Tibial artery (tissue), 4 donors: ENCODE measurements at regions of chr3 and their contacts with region 1.

Region 1: DNA sequence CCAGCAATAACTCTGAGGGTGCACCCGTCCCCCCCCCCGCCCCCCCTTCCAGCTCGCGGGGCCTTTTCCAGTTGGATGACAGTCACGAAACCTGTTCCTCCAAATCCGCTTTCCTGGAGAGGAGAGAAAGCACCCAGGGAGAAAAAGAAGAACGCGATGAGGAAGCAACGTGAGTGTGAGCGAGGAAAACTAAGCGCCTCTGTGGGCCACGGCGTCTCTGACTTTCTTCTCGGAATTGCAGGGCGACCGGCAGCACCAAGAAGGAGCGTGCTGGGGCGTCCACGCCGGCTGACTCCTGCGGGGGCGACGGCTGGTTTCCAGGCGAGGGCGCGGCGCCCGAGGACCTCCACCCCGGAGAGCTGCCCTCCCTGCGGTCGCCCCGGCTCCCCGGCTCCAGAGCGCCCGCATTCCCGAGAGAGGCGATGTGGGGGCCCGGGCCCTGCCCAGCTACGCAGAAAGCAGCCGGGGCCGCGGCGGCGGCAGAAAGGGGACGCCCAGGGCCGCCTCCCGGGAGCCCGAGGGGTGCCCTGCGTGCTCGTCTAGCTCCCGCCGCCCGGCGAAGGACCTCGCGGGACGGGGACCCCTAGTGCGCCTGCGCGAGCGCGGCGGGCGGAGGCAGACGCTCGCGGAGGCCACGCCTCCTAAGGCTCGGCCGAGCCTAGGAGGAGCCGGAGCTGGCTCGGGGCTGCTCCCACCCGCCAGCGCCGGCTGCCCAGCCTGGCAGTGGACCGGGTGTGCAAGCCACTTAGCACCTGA is 15.4 kb upstream of the ADIPOQ start:
- DNase-seq: peak; percentile 49 to 86
- H3K4me3 ChIP-seq: peak overlapping the region; percentile 65 to 93
- H3K27ac ChIP-seq: peak overlapping the region; percentile 68 to 70
- H3K4me1 ChIP-seq: peaks cover 0 to 18% (median 10%) of the 10 kb centered on the region in 4 donors
- H3K27me3 ChIP-seq: peaks cover 0 to 34% of the 10 kb centered on the region in 2 donors
- CTCF ChIP-seq: peak in 1 of 2 experiments; percentile 16

Region 2: DNA sequence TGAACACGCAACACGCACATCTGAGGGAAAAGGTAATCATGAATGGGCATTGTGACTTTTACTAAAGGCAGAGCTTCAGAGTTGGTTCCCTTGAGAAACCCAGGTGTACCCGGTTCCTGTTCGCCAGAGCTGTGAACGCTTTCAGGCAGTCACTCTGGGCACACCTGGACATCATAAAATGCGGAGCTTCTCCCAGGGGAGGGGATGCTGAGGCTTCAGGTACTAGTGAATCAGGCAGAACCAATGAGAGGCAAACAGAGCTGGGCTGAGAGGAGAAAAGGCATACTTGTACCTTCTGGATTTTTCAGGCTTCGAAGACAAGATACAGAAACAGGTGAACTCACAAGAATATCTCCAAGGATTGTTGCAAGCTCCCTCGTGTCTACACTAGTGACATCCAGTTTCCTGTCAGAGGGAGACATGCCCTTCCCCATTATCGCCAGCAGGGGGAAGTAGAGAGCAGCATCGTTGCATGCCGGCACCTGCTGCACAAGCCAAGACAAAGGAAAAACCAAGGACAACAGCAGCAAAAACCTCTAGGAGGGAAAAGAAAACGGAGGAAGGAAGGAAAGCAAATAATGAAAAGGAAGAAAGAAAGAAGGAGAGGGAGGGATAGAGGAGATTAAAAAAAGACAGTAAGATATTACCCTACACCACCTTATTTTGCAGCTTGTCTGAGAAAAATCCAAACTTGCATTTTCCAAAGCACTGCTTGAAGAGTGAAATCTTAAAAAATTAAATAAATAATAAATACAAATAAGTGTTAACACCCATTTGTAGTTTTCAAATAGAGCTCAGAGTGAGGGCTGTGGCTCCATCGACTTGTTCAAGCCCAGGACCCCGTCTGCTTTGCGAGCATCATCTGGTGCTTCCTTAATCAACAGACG is 212.3 kb before region 1 on chr3:
- intact Hi-C with region 1: loop called (anchors 2 kb)
- DNase-seq: peak; percentile 54 to 74
- H3K4me3 ChIP-seq: no peak overlapping the region
- H3K27ac ChIP-seq: no peak overlapping the region
- H3K4me1 ChIP-seq: peaks cover 0 to 11% (median 10%) of the 10 kb centered on the region in 4 donors
- H3K27me3 ChIP-seq: peaks cover 0 to 26% of the 10 kb centered on the region in 2 donors
- CTCF ChIP-seq: peak; percentile 84 to 97